GM13977 (cell line): ENCODE measurements at regions of chr6 and their contacts with region 1.

Region 1: DNA sequence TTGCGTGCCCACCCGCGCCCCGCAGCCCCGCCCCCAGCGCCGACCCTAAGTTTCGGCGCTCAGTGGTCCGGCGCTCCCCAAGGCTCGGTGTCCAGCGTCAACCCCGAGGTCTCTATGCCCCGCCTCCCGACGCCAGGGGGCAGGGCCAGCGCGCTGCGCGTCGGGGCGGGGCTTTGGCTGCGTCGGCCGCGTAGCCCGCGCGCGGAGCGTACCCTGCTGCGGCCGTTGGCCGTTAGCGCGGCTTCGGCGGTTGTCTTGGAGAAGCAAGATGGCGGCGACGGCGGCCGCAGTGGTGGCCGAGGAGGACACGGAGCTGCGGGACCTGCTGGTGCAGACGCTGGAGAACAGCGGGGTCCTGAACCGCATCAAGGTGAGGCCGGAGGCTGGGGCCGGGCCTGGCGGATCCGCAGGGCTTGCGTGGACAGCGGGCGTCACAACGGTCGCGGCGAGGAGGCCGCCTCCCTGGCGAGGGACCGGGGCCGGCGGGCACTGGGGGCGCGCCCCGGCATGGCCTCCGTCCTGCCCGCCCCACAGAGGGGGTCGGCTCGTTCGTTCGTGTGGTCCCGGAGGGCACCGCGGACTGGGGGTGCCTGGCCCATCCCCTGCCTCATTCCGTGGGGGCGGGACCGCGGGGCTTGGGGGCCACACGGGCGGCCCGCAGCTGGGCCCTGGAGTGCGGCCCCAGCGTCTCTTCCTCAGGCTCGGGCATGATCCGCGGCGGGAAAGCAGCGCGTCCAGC is at the start of gene CEP43:
- DNase-seq: peak; percentile 99
- CTCF ChIP-seq: no peak

Region 2: GRCh38 chr6:166751051-166751595 is 248.2 kb before region 1 on chr6:
- in situ Hi-C with region 1: no loop called
- DNase-seq: peak; percentile 64
- CTCF ChIP-seq: no peak

Region 3: GRCh38 chr6:167130008-167130677 is 130.8 kb after region 1 on chr6:
- in situ Hi-C with region 1: loop called (anchors 10 kb)
- DNase-seq: peak; percentile 78
- CTCF ChIP-seq: no peak

Region 4: GRCh38 chr6:167501781-167502385 is 502.6 kb after region 1 on chr6:
- in situ Hi-C with region 1: no loop called
- DNase-seq: no peak
- CTCF ChIP-seq: peak; percentile 0